ENCODE measurements at regions of chr1 and their contacts with region 1.

Region 1: DNA sequence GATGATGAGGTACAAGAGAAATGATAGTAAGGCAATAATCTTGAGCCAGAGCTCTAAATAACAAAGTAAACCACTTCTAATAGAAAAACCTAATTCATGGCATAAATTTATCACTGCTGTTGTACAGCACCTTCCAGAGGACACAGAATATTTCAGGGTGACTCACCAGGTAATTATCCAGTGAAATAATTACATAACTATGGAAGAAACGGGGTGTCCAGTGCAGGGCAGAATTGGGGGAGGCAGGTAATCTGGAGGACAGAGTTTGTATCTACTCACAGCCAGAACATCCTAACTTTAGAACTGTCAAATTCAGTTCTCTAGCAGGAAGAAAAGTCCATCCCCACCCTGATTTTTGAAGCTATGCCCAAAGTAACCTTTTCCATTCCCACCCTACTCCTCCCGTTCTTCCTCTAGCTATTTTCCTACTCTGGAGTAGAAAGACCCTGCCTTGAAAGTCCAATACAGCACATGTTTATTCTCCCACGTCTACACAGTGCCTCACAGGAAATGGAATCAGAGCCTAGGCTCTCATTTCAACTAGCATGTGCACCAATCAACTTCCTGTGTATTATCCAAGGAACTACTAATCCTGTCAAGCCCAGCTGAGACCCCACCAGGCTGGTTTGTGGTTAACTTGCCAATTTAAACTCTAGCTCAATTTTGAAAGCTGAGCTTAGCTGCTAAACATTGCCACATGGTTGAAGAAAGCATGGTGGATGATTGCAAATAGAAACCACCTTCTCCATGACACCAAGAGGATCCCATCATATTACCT is 96.6 kb downstream of the PTPN14 start:
- DNase-seq: no peak

Region 2: GRCh38 chr1:214548988-214549387 is 94.2 kb after region 1 on chr1:
- intact Hi-C with region 1: loop called (anchors 10 kb)
- DNase-seq: no peak

Measured in posterior cingulate gyrus (tissue), 11 donors.